ENCODE measurements at regions of chr18 and their contacts with region 1.

Region 1: GRCh38 chr18:13112982-13113381 is 105.6 kb upstream of the LDLRAD4 start:
- DNase-seq: peak; percentile 79 to 92 (median 83)
- ATAC-seq: peak; percentile 96 to 100 (median 98)
- H3K4me3 ChIP-seq: no peak overlapping the region
- H3K27ac ChIP-seq: peak overlapping the region in 9 of 12 donors; percentile 32 to 73 (median 47)
- H3K4me1 ChIP-seq: peaks cover 0 to 20% (median 0%) of the 10 kb centered on the region in 12 donors
- H3K27me3 ChIP-seq: no peaks in the 10 kb centered on the region
- CTCF ChIP-seq: peak; percentile 25 to 72 (median 55)
- POLR2A ChIP-seq: no peak

Region 2: DNA sequence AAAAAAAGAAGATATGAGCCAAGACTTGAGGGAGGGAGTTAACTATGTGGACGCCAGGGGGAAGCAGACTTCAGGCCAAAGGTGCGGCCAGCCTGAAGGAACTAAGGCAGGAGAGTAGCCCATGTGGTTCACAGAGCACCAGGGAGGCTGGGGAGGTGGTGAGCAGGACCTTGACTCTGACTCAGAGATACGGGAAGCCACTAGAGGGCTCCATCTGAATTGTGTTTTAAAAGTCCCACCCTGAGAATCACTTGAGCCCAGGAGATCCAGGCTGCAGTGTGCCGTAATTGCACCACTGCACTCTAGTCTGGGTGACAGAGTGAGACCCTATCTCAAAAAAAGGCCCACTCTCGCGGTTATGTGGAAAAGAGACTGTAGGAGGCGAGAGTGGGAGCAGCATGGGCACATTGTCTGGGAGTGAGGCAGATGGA is 109.5 kb before region 1 on chr18:
- intact Hi-C with region 1: loop called in 4 of 10 experiments (anchors 10 kb)
- DNase-seq: peak in 2 of 5 donors; percentile 35 to 42
- ATAC-seq: peak; percentile 65 to 89 (median 78)
- H3K4me3 ChIP-seq: no peak overlapping the region
- H3K27ac ChIP-seq: no peak overlapping the region
- H3K4me1 ChIP-seq: peaks cover 0 to 24% (median 1%) of the 10 kb centered on the region in 12 donors
- H3K27me3 ChIP-seq: no peaks in the 10 kb centered on the region
- CTCF ChIP-seq: peak; percentile 19 to 53 (median 36)
- POLR2A ChIP-seq: no peak

Region 3: DNA sequence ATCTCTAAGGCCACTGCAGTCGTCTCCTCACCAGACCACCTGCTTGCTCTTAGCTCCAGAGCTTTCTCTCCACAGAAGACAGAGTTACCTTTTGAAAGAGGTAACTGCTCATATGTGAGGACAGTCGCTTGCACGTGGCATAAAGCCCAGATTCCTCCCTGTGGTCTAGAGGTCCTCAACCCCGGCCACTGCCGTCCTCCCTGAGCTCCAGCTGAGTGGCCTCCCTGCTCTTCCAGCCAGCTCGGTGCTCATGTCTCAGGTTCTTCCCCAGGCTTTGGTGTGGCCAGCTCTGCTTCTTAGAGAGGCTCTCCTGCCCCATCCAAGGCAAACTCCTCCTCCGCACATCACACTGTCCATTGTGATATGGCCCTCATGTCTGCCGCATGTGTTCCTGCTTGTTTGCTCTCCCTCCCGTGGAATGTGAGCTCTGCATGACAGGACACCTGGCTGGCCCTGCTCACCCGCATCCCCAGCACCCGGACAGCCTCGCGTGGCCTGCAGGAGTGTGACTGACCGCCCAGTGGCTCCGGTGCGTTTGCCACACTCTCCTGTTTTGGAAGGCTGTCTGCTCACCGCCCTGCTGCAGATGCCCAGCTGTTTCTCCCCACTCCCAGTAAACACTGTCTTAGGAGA is 14.1 kb after region 1 on chr18:
- intact Hi-C with region 1: loop called in 1 of 10 experiments (anchors 1 kb)
- DNase-seq: no peak
- ATAC-seq: peak in 1 of 4 donors; percentile 25
- H3K4me3 ChIP-seq: no peak overlapping the region
- H3K27ac ChIP-seq: no peak overlapping the region
- H3K4me1 ChIP-seq: no peaks in the 10 kb centered on the region
- H3K27me3 ChIP-seq: no peaks in the 10 kb centered on the region
- CTCF ChIP-seq: no peak
- POLR2A ChIP-seq: no peak

Region 4: DNA sequence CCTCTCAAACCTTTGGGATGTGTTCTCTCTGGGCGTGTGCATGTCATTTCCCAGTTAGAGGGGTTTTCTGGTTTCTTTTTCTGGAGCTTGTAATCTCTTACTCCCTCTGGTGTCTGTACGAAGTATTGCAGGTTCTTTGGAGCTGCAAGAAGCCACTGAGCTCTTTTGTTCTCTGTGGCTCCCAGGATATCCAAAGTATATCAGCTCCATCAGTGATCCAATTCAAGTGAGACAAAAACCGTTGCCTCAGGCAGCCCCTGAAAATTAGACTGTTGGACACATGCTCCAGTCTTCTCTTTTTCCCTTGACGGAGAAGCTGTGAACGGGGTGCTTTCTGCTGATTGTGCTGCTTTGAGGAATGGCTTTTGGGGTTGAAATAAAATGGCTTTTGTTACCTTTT is 46.6 kb after region 1 on chr18:
- intact Hi-C with region 1: loop called in 2 of 10 experiments (anchors 5 to 10 kb)
- DNase-seq: no peak
- ATAC-seq: peak in 2 of 4 donors; percentile 29 to 33
- H3K4me3 ChIP-seq: no peak overlapping the region
- H3K27ac ChIP-seq: no peak overlapping the region
- H3K4me1 ChIP-seq: no peaks in the 10 kb centered on the region
- H3K27me3 ChIP-seq: no peaks in the 10 kb centered on the region
- CTCF ChIP-seq: peak; percentile 71 to 88 (median 82)
- POLR2A ChIP-seq: no peak

Region 5: GRCh38 chr18:13166023-13166422 is 53.0 kb after region 1 on chr18:
- intact Hi-C with region 1: loop called in 1 of 10 experiments (anchors 10 kb)
- DNase-seq: no peak
- ATAC-seq: no peak
- H3K4me3 ChIP-seq: no peak overlapping the region
- H3K27ac ChIP-seq: no peak overlapping the region
- H3K4me1 ChIP-seq: no peaks in the 10 kb centered on the region
- H3K27me3 ChIP-seq: no peaks in the 10 kb centered on the region
- CTCF ChIP-seq: no peak
- POLR2A ChIP-seq: no peak

Region 6: GRCh38 chr18:13268158-13269012 is 155.4 kb after region 1 on chr18:
- intact Hi-C with region 1: no loop called
- DNase-seq: peak in 3 of 5 donors; percentile 21 to 55 (median 45)
- ATAC-seq: no peak
- H3K4me3 ChIP-seq: peak overlapping the region in 1 of 12 donors; percentile 10
- H3K27ac ChIP-seq: peak overlapping the region; percentile 6 to 86 (median 72)
- H3K4me1 ChIP-seq: peaks cover 8 to 100% (median 82%) of the 10 kb centered on the region in 12 donors
- H3K27me3 ChIP-seq: no peaks in the 10 kb centered on the region
- CTCF ChIP-seq: no peak
- POLR2A ChIP-seq: no peak

Region 7: DNA sequence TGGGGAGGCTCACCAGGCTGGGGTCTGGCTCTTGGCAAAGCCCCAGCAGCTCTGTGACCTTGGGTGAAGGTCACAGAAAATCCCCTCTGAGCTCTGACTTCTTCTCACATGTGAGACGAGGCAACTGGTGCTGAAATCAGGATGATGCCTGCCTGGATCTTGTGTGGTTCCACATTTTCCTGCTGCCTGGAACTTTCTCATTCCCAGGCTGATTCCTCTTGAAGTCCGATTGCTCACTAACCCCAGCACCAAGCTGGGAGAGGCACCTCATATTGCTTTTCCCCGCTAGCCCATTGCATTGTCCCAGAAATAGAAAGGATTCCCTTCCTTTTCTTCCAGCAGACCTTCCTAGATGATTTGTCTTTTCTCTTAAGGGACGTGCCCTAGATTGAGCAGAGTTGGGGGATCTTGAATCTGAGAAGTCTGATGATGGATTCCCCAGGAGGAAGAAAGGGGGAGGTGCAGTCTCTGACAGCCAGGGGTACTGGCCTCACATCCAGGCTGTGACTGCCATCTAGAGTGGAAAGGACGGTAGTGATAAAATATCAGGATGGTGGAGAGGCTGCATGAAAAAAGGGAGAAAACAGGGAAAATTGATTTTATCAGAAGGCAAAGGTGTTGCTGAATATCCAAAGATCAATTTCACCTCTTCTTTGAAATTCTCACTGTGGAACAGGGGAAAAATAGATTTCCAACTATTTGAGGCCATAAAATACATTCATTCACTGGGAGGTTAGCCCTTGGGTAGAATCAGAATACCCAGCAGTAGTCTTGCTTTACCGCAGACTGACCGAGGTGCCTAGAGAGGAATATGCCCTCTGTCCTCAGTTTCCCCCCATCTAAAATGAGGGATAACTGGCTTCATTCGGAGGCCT is 517.1 kb after region 1 on chr18:
- intact Hi-C with region 1: loop called in 3 of 10 experiments (anchors 5 to 10 kb)
- DNase-seq: peak in 4 of 5 donors; percentile 58 to 67 (median 62)
- ATAC-seq: peak; percentile 82 to 90 (median 86)
- H3K4me3 ChIP-seq: no peak overlapping the region
- H3K27ac ChIP-seq: peak overlapping the region in 8 of 12 donors; percentile 5 to 72 (median 34)
- H3K4me1 ChIP-seq: peaks cover 0 to 37% (median 11%) of the 10 kb centered on the region in 12 donors
- H3K27me3 ChIP-seq: no peaks in the 10 kb centered on the region
- CTCF ChIP-seq: peak; percentile 66 to 91 (median 86)
- POLR2A ChIP-seq: no peak

Region 8: GRCh38 chr18:13800505-13801259 is 687.7 kb after region 1 on chr18:
- intact Hi-C with region 1: loop called in 1 of 10 experiments (anchors 10 kb)
- DNase-seq: peak; percentile 65 to 85 (median 76)
- ATAC-seq: peak; percentile 89 to 98 (median 94)
- H3K4me3 ChIP-seq: peak overlapping the region in 10 of 12 donors; percentile 6 to 49 (median 33)
- H3K27ac ChIP-seq: no peak overlapping the region
- H3K4me1 ChIP-seq: peaks cover 0 to 15% (median 4%) of the 10 kb centered on the region in 12 donors
- H3K27me3 ChIP-seq: peaks cover 0 to 30% (median 0%) of the 10 kb centered on the region in 9 donors
- CTCF ChIP-seq: peak; percentile 26 to 66 (median 50)
- POLR2A ChIP-seq: no peak